Caco-2 (cell line): ENCODE measurements at regions of chr5 and their contacts with region 1.

Region 1: DNA sequence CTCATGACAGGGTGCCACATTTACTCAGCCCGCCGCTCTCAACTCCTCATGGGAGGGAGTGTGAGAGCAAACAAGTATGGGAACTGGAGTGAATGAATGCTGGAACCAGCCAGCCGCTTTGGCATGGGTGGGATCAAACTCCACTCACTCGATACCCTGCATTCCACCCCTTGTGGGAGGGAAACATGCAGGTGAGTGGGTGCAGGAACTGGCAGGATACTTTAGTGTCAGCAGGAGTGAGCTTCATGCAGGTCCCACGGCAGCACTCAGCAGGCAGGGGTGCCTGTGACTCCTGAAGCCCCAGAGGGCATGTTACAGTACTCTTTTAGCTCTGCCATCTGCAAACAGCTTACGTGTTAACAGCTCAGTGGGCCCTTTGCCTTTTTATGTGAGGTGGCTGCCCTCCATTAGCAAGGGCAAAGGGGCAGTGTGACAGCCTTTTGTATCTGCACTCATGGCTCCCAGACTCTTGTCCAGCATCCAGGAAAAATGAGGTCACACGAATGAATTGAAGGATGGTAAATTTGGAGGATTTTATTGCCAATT is 433.2 kb upstream of the NMUR2 start:
- DNase-seq: no peak
- H3K4me3 ChIP-seq: no peak overlapping the region
- H3K4me3 Mint-ChIP-seq: no peak overlapping the region
- H3K27ac Mint-ChIP-seq: no peak overlapping the region
- H3K4me1 ChIP-seq: no peaks in the 10 kb centered on the region
- H3K4me1 Mint-ChIP-seq: no peaks in the 10 kb centered on the region
- H3K27me3 ChIP-seq: no peaks in the 10 kb centered on the region
- H3K27me3 Mint-ChIP-seq: peaks cover 6% of the 10 kb centered on the region
- CTCF ChIP-seq: no peak

Region 2: DNA sequence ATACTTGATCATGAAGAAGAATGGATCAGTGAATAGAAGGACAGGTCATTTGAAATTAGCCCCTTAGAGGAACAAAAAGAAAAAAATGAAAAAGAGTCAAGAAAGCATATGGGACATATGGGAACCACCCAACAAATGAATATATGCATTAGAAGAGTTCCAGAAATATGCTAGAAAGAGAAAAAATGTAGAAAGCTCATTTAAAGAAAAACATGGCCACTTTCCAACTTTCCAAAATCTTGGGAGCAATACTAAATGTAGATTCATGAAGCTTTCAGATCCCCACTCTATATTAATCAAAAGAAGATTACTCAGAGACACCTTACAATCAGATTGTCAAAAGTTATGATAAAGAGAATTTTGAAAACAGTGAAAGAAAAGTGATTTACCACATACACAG is 98.4 kb before region 1 on chr5:
- CTCF ChIA-PET with region 1: no interaction called
- POLR2A ChIA-PET with region 1: no interaction called
- intact Hi-C with region 1: loop called (anchors 5 kb)
- DNase-seq: no peak
- H3K4me3 ChIP-seq: no peak overlapping the region
- H3K4me3 Mint-ChIP-seq: no peak overlapping the region
- H3K27ac Mint-ChIP-seq: no peak overlapping the region
- H3K4me1 ChIP-seq: no peaks in the 10 kb centered on the region
- H3K4me1 Mint-ChIP-seq: no peaks in the 10 kb centered on the region
- H3K27me3 ChIP-seq: no peaks in the 10 kb centered on the region
- H3K27me3 Mint-ChIP-seq: no peaks in the 10 kb centered on the region
- CTCF ChIP-seq: no peak